Activated CD4-positive, alpha-beta T cell treated with anti-CD3 and anti-CD28 coated beads for 36 hours (primary cell): ENCODE measurements at regions of chr4 and their contacts with region 1.

Region 1: GRCh38 chr4:183074296-183074990 is 24.6 kb upstream of the WWC2 start:
- DNase-seq: no peak
- ATAC-seq: no peak
- H3K4me3 Mint-ChIP-seq: no peak overlapping the region
- H3K27ac Mint-ChIP-seq: no peak overlapping the region
- H3K4me1 Mint-ChIP-seq: no peaks in the 10 kb centered on the region
- H3K27me3 Mint-ChIP-seq: peaks cover 6% of the 10 kb centered on the region

Region 2: DNA sequence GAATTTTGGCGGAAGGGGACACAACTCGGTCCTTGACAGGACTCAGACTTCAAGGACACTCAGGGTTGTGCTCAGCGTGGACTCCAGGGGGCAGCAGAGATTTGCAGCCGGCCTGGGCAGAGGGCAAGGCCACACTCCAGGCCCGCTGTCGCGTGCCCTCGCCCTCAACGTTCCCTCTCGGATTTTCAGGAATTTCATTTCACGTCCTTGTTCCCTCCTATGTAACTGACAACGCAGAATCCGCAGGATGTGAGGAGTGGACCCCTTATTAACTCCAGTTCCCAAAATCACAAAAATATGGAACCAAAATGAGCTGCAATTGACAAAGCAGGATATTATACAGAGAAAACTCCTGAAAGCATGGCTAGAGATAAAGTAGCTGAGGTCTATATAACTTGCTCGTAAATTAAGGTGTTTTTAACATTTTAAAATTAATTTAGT is 136.2 kb before region 1 on chr4:
- CTCF ChIA-PET with region 1: interaction called, 5 read pairs
- POLR2A ChIA-PET with region 1: interaction called, 3 read pairs
- intact Hi-C with region 1: loop called (anchors 1 kb)
- DNase-seq: peak; percentile 83
- ATAC-seq: peak; percentile 98
- H3K4me3 Mint-ChIP-seq: no peak overlapping the region
- H3K27ac Mint-ChIP-seq: no peak overlapping the region
- H3K4me1 Mint-ChIP-seq: peaks cover 2% of the 10 kb centered on the region
- H3K27me3 Mint-ChIP-seq: peaks cover 7% of the 10 kb centered on the region

Region 3: DNA sequence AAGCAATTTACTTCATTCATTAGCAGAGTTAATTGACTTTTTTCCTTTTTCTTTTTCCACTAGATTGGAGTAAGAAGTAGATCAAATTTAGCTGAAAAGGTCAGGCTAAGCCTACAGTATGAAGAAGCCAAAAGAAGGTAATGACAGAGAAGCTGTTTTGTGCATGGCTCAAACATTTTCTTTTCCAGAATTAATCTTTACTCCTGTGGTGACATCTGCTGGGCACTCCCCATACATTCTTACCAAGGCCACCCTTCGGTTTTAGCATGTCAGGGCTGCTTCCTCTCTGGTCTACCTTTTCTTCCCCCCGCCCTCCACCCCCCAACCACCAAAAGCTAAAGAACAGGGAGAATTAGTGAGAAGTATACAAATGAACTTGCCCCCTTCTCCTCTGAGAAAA is 175.4 kb after region 1 on chr4:
- CTCF ChIA-PET with region 1: interaction called, 51 read pairs
- POLR2A ChIA-PET with region 1: no interaction called
- intact Hi-C with region 1: loop called (anchors 1 kb)
- DNase-seq: peak; percentile 32
- ATAC-seq: peak; percentile 53
- H3K4me3 Mint-ChIP-seq: no peak overlapping the region
- H3K27ac Mint-ChIP-seq: no peak overlapping the region
- H3K4me1 Mint-ChIP-seq: no peaks in the 10 kb centered on the region
- H3K27me3 Mint-ChIP-seq: no peaks in the 10 kb centered on the region

Region 4: GRCh38 chr4:183256756-183257385 is 182.4 kb after region 1 on chr4:
- CTCF ChIA-PET with region 1: interaction called, 78 read pairs
- POLR2A ChIA-PET with region 1: no interaction called
- intact Hi-C with region 1: loop called (anchors 1 kb)
- DNase-seq: peak; percentile 67
- ATAC-seq: peak; percentile 53
- H3K4me3 Mint-ChIP-seq: no peak overlapping the region
- H3K27ac Mint-ChIP-seq: no peak overlapping the region
- H3K4me1 Mint-ChIP-seq: no peaks in the 10 kb centered on the region
- H3K27me3 Mint-ChIP-seq: no peaks in the 10 kb centered on the region

Region 5: GRCh38 chr4:183407128-183407585 is 332.7 kb after region 1 on chr4:
- CTCF ChIA-PET with region 1: interaction called, 4 read pairs
- POLR2A ChIA-PET with region 1: no interaction called
- intact Hi-C with region 1: loop called (anchors 2 to 10 kb)
- DNase-seq: peak; percentile 95
- ATAC-seq: peak; percentile 98
- H3K4me3 Mint-ChIP-seq: peak overlapping the region; percentile 78
- H3K27ac Mint-ChIP-seq: peak overlapping the region; percentile 88
- H3K4me1 Mint-ChIP-seq: peaks cover 18% of the 10 kb centered on the region
- H3K27me3 Mint-ChIP-seq: no peaks in the 10 kb centered on the region